ENCODE measurements at regions of chr7 and their contacts with region 1.

Region 1: DNA sequence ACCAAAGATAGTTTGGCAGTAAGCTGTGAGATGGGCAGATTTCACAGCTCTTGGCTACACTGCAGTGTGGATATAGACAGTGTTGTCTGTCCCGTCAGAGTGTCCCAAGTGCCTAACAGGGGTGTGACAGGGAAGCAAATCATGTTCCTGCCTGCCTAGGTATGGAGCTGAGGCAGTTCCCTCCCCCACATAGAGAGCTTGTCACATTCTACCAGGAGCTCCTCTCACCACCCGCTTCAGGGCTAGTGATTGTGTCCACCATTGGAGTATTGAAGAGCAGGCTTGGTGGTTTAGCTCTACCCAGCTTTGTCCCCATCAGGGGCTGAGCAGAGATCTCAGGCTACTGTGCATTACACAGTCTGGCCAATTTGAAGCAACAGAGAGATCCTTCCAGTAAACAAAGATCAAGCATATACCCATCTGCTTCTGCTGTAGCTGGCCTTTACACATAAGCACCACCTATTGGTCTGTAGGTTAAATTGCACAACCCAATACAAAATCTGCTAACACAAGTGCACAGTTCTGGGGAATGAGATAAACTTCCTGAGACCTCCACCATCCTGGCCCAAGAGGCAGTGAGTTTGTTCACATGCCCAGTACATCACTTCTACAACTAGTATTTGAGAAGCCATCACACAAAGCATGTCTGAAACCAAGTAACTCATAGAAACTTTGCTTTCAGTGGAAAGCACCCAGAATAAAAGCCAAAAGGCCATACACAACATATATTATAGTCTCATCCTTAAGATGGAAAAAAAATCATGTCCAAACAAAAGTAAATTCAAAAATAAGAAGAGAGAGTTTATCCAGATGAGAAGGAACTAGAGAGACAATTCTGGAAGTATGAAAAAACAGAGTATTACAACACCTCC is 67.3 kb downstream of the GLCCI1 start:
- DNase-seq: no peak
- ATAC-seq: peak; percentile 92
- H3K4me3 Mint-ChIP-seq: no peak overlapping the region
- H3K27ac Mint-ChIP-seq: peak overlapping the region; percentile 21
- H3K4me1 Mint-ChIP-seq: peaks cover 10% of the 10 kb centered on the region
- H3K27me3 Mint-ChIP-seq: no peaks in the 10 kb centered on the region
- CTCF ChIP-seq: no peak

Region 2: DNA sequence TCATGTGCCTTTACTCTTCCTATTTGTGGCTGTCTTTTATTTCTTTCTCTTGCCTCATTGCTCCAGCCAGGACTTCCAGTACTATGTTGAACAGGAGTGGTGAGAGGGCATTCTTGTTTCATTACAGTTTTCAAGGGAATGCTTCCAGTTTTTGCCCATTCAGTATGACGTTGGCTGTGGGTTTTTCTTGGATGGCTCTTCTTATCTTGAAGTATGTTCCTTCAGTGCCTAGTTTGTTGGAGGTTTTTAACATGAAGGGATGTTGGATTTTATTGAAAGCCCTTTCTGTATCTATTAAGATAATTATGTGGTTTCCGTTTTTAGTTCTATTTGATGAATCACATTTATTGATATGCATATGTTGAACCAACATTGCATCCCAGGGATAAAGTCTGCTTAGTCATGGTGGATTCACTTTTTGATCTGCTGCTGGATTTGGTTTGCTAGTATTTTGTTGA is 29.5 kb after region 1 on chr7:
- CTCF ChIA-PET with region 1: no interaction called
- POLR2A ChIA-PET with region 1: no interaction called
- intact Hi-C with region 1: no loop called
- DNase-seq: no peak
- ATAC-seq: no peak
- H3K4me3 Mint-ChIP-seq: no peak overlapping the region
- H3K27ac Mint-ChIP-seq: no peak overlapping the region
- H3K4me1 Mint-ChIP-seq: peaks cover 9% of the 10 kb centered on the region
- H3K27me3 Mint-ChIP-seq: no peaks in the 10 kb centered on the region
- CTCF ChIP-seq: no peak

Region 3: GRCh38 chr7:8190119-8190895 is 154.4 kb after region 1 on chr7:
- CTCF ChIA-PET with region 1: interaction called, 8 read pairs
- POLR2A ChIA-PET with region 1: interaction called, 4 read pairs
- intact Hi-C with region 1: loop called (anchors 5 kb)
- DNase-seq: no peak
- ATAC-seq: peak; percentile 87
- H3K4me3 Mint-ChIP-seq: no peak overlapping the region
- H3K27ac Mint-ChIP-seq: no peak overlapping the region
- H3K4me1 Mint-ChIP-seq: peaks cover 20% of the 10 kb centered on the region
- H3K27me3 Mint-ChIP-seq: no peaks in the 10 kb centered on the region
- CTCF ChIP-seq: no peak

Region 4: DNA sequence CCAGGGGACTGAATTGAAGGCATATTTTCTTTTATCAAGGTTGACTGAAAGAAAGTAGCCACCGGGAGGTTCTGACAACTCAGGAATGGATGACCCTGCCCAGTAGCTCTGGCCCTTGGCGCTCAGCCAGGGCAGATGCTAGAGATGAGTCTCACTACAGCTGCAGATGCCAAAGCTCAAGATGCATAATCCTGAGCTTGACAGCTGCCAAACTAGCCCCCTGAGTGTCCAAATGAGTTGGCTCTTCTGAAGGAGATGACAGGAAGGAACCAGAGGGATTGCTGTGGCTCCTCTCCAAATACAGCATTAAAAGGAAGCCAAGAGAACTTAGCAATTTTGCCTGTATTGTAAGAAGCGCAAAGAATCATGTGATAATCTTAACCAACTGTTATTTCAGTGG is 476.0 kb after region 1 on chr7:
- CTCF ChIA-PET with region 1: no interaction called
- POLR2A ChIA-PET with region 1: no interaction called
- intact Hi-C with region 1: no loop called
- DNase-seq: no peak
- ATAC-seq: no peak
- H3K4me3 Mint-ChIP-seq: no peak overlapping the region
- H3K27ac Mint-ChIP-seq: no peak overlapping the region
- H3K4me1 Mint-ChIP-seq: no peaks in the 10 kb centered on the region
- H3K27me3 Mint-ChIP-seq: no peaks in the 10 kb centered on the region
- CTCF ChIP-seq: no peak

Measured in activated B cell treated with CpG ODN at 0.5 μM for 24 hours (primary cell).